OCI-LY7 (cell line): ENCODE measurements at regions of chr1 and their contacts with region 1.

Region 1: GRCh38 chr1:45843474-45843905 is 40.1 kb downstream of the MAST2 start:
- DNase-seq: peak; percentile 61
- H3K4me3 ChIP-seq: peak overlapping the region; percentile 8
- H3K27ac ChIP-seq: peak overlapping the region; percentile 96
- H3K4me1 ChIP-seq: peaks cover 61% of the 10 kb centered on the region
- CTCF ChIP-seq: peak; percentile 87

Region 2: DNA sequence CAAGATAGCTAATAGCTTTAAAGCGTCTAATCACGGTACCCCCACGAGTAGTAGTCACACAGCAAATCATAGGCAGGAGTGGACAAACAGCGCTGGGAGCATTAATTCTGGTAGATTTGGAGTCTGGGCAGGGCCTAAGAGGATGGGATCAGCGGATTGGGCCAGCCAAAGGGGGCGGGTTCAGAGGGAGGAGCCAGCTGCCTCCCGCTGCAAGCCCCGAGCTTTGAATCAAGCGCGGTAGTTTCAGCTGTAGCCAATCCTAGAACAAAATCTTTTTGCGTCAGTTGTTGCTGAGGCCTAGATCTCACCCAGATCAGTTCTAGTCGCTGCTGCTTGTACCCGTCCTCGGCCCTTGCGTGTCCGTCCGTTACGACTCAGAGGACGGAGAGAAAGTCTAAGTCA is 260.2 kb before region 1 on chr1:
- CTCF ChIA-PET with region 1: no interaction called
- POLR2A ChIA-PET with region 1: no interaction called
- intact Hi-C with region 1: loop called (anchors 5 kb)
- DNase-seq: peak; percentile 98
- H3K4me3 ChIP-seq: peak overlapping the region; percentile 99
- H3K27ac ChIP-seq: peak overlapping the region; percentile 83
- H3K4me1 ChIP-seq: peaks cover 54% of the 10 kb centered on the region
- CTCF ChIP-seq: no peak

Region 3: GRCh38 chr1:45643978-45644377 is 199.5 kb before region 1 on chr1:
- CTCF ChIA-PET with region 1: no interaction called
- POLR2A ChIA-PET with region 1: no interaction called
- intact Hi-C with region 1: loop called (anchors 2 kb)
- DNase-seq: peak; percentile 44
- H3K4me3 ChIP-seq: no peak overlapping the region
- H3K27ac ChIP-seq: peak overlapping the region; percentile 74
- H3K4me1 ChIP-seq: peaks cover 36% of the 10 kb centered on the region
- CTCF ChIP-seq: peak; percentile 67

Region 4: DNA sequence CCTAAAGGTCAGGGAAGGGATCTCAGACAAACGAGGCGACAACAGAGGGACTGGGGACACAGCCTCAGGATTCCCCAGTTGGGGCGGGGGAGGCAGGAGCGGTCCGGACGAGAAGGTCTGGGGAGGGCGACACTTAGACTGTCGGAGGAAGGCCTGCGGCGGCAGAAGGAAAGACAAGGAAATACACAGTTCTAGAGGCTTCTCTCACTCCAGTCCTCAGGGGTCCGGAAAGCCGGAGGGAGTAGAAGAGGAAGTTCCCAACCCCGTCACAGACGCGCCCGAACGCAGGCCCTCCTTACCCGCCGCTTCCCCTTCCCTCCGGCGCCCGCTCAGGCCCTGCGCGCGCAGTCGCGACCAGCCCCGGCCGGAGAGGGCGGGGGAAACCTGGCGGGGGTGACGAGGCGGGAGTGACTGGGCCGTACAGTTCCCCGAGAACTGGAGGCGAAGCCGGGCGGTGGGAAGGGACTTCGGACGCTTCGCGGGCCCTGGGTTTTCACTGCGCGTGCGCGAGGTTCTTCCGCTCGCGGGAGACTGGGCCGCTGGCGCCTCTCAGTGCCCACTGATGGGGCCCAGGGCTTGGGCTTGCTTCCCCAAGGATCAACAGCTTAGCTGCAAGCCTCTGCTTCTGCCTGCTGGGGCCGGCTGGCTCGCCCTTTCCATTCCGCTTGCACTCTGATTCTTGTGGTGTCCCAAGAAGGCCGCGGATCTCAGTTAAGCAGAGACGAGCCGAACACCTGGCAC is 93.0 kb before region 1 on chr1 and contains the start of gene IPP:
- CTCF ChIA-PET with region 1: no interaction called
- POLR2A ChIA-PET with region 1: no interaction called
- intact Hi-C with region 1: loop called (anchors 2 kb)
- DNase-seq: peak; percentile 98
- H3K4me3 ChIP-seq: peak within 1 kb of the TSS; percentile 73
- H3K27ac ChIP-seq: peak within 1 kb of the TSS; percentile 81
- H3K4me1 ChIP-seq: peaks cover 13% of the 10 kb centered on the region
- CTCF ChIP-seq: peak; percentile 39; the same call in 1 of the 2 replicates
- total RNA-seq, gene IPP: 4.6 and 6.3 TPM in 2 replicates

Region 5: DNA sequence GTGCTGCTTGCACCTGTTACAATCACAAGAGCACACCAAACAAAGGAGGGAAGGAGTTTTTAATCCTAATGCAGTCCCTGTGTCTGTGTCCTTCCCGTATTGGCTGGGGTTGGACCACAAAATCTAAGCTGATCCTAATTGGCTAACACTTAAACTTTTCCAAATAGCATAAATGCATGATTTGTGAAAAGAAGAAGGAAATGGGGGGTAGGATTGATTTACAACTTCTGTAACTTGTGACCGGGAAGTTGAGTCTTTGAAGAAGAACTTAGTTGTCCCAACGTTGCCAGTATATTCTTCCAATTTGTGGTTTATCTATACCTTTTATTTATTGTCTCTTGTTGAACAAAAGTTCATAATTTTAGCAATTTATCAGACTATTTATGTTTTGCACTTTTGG is 81.2 kb before region 1 on chr1:
- CTCF ChIA-PET with region 1: no interaction called
- POLR2A ChIA-PET with region 1: no interaction called
- intact Hi-C with region 1: no loop called
- DNase-seq: no peak
- H3K4me3 ChIP-seq: no peak overlapping the region
- H3K27ac ChIP-seq: no peak overlapping the region
- H3K4me1 ChIP-seq: peaks cover 5% of the 10 kb centered on the region
- CTCF ChIP-seq: no peak

Region 6: DNA sequence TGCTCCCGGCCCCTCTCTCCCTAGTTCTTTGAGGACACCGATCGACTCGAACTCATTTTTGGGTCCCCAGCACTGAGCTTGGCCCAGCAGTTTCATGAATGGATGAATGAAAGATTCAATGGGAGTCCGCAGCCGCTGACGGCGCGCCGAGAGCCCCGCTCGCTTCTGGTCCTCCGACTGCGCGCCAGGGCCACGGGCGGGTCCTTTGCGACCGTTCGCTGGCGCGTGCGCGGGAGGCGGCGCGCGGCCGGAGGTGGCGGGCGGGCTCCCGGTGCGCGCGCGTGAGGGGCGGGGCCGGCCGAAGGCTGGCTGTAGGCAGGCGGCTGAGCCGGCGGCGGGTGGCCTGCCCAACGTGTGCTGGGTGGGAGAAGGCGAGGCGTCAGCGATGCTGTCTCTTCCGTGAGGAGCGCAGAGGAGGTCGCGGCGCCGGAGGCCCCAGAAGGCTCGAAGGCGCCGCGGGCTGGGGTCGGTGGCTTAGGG is 40.1 kb before region 1 on chr1 and contains the start of gene MAST2:
- CTCF ChIA-PET with region 1: interaction called, 3 read pairs
- POLR2A ChIA-PET with region 1: interaction called, 4 read pairs
- intact Hi-C with region 1: loop called (anchors 2 kb)
- DNase-seq: peak; percentile 94
- H3K4me3 ChIP-seq: peak within 1 kb of the TSS; percentile 84
- H3K27ac ChIP-seq: peak within 1 kb of the TSS; percentile 53
- H3K4me1 ChIP-seq: peaks cover 21% of the 10 kb centered on the region
- CTCF ChIP-seq: no peak
- total RNA-seq, gene MAST2: 25.5 and 32.1 TPM in 2 replicates

Region 7: DNA sequence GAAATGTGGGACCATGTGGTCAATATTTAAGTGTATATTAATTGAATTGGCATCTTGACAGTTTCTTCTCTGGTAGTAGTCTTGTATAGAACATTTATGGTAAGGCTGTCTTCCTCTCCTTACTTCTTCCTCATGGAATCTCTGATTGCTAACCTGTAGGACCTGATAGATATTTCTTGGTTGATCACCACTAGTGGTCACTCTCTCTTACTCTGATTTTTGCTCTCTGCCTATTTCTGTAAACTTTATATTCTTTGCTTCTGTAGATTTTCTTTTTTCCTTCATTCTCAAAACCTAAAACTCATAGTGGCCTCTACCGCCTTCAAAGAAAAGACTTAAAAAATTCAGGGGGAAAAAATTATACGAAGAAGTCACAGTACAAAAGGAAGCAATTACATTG is 18.9 kb before region 1 on chr1:
- CTCF ChIA-PET with region 1: no interaction called
- POLR2A ChIA-PET with region 1: interaction called, 17 read pairs
- intact Hi-C with region 1: no loop called
- DNase-seq: no peak
- H3K4me3 ChIP-seq: no peak overlapping the region
- H3K27ac ChIP-seq: no peak overlapping the region
- H3K4me1 ChIP-seq: peaks cover 31% of the 10 kb centered on the region
- CTCF ChIP-seq: peak; percentile 64